Heart left ventricle (tissue), 16 donors: ENCODE measurements at regions of chr6 and their contacts with region 1.

Region 1: DNA sequence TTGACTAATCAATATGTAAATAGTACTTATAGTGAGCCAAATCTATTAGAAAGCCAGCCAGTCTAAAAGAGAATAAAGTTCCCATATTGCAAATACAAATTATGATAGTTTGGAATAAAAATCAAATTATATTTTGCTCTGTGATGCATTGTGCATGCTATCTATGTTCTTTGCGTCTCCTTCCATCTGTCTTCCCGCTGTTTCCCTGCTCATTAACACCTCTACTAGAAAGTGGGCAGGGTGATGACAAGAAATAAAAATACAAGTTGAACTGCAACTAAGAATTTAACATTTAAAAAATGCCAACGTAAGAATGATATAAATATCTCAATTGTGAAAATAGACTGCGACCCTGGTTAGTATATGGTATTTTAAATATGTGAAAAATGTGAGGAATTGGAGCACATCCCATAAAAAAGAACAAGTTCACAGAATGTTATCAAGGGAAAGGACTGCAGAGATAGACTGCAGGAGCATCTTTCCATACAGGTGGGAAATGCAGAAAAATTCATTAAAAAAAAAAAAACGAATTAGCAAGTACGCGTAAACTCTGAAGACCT is 157.6 kb upstream of the PDE7B start:
- DNase-seq: no peak
- ATAC-seq: no peak
- H3K4me3 ChIP-seq: no peak overlapping the region
- H3K27ac ChIP-seq: no peak overlapping the region
- H3K4me1 ChIP-seq: no peaks in the 10 kb centered on the region
- H3K27me3 ChIP-seq: no peaks in the 10 kb centered on the region
- CTCF ChIP-seq: no peak
- POLR2A ChIP-seq: no peak

Region 2: DNA sequence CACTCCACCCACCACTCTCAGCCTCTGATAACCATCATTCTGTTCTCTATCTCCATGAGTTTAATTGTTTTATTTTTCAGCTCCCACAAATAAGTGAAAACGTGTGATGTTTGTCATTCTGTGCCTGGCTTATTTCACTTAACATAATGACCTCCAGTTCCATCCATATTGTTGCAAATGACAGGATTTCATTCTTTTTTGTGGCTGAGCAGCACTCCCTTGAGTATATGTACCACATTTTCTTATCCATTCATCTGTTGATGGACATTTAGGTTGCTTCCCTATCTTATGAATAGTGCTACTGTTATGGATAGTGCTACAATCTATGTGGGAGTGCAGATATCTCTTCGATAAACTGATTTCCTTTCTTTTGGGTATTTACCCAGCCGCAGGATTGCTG is 54.3 kb after region 1 on chr6:
- intact Hi-C with region 1: loop called in 1 of 10 experiments (anchors 5 kb)
- DNase-seq: no peak
- ATAC-seq: no peak
- H3K4me3 ChIP-seq: no peak overlapping the region
- H3K27ac ChIP-seq: no peak overlapping the region
- H3K4me1 ChIP-seq: no peaks in the 10 kb centered on the region
- H3K27me3 ChIP-seq: no peaks in the 10 kb centered on the region
- CTCF ChIP-seq: no peak
- POLR2A ChIP-seq: no peak

Region 3: GRCh38 chr6:135962731-135963130 is 268.8 kb after region 1 on chr6:
- intact Hi-C with region 1: no loop called
- DNase-seq: no peak
- ATAC-seq: no peak
- H3K4me3 ChIP-seq: no peak overlapping the region
- H3K27ac ChIP-seq: no peak overlapping the region
- H3K4me1 ChIP-seq: no peaks in the 10 kb centered on the region
- H3K27me3 ChIP-seq: no peaks in the 10 kb centered on the region
- CTCF ChIP-seq: no peak
- POLR2A ChIP-seq: no peak